ENCODE measurements at regions of chr4 and their contacts with region 1.

Region 1: DNA sequence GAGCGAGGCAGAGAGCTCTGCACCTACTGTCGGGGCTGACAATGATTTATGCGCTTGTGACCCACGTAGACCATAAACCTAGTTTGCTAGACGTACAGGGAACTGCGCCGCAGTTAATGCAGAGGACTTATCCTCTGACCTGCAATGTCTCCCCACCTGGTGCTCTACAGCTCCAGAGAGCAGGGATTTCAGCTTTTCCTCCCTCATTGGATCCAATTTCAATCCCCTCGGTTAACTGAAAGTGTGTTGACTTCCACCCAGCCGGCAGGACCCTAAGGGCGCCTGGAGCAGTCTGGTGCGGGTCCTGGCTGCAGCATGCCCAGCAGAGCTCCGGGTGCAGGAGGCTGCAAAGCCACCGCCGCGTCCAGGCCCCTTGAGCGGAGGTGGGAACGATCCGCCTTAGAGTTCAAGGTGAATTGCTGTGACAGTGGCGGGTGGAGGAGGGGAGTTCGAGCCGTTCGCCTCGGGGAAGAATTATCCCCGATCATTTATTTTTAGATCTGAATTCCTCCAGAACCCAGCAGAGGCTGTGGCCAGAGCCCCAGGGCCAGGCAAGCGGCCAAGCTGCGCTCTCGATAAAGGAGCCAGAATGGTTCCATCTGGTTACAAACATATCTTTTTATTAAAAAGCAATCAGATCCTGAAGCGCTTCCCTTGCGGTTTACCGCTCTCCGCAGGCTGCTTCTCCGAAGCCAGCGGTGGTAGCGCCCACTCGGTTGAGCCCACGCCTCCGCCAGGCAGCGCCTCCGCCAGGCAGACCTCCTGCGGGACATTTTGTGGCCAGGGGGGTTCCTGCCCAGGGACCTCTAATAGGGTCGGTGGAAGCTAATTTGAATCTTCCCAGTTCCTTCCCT is 66.0 kb downstream of the FBXO8 start:
- DNase-seq: peak; percentile 38 to 71 (median 43)
- H3K4me3 ChIP-seq: peak overlapping the region in 2 of 4 donors; percentile 17 to 52
- H3K27ac ChIP-seq: no peak overlapping the region
- H3K4me1 ChIP-seq: peaks cover 9 to 25% of the 10 kb centered on the region in 2 donors
- H3K27me3 ChIP-seq: peaks cover 33% of the 10 kb centered on the region
- CTCF ChIP-seq: no peak
- POLR2A ChIP-seq: no peak

Region 2: GRCh38 chr4:173934201-173934600 is 283.3 kb before region 1 on chr4:
- intact Hi-C with region 1: no loop called
- DNase-seq: no peak
- H3K4me3 ChIP-seq: no peak overlapping the region
- H3K27ac ChIP-seq: no peak overlapping the region
- H3K4me1 ChIP-seq: peaks cover 0 to 6% of the 10 kb centered on the region in 2 donors
- H3K27me3 ChIP-seq: no peaks in the 10 kb centered on the region
- CTCF ChIP-seq: no peak
- POLR2A ChIP-seq: no peak

Region 3: GRCh38 chr4:174265916-174266315 is 48.4 kb after region 1 on chr4:
- intact Hi-C with region 1: no loop called
- DNase-seq: no peak
- H3K4me3 ChIP-seq: no peak overlapping the region
- H3K27ac ChIP-seq: no peak overlapping the region
- H3K4me1 ChIP-seq: peaks cover 0 to 3% of the 10 kb centered on the region in 2 donors
- H3K27me3 ChIP-seq: no peaks in the 10 kb centered on the region
- CTCF ChIP-seq: no peak
- POLR2A ChIP-seq: no peak

Region 4: DNA sequence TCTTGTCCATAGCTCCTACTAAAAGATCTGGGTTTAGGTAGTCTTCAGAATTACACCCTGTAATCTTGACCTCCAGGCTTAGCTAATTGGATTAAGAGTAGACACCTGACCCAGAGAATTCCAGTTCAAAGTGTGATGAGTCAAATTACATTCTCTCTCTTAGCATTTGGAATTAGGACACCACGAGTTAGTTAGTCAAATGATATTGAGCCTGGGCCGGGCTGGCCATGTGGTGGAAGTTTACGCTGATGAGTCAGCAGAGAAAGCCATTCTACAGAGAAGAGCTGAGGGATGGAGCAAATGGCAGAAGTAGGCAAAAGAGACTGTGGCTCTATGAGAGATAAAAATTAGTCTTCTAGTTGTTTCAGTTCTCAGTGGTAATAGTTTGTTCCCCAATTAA is 97.3 kb after region 1 on chr4:
- intact Hi-C with region 1: loop called in 1 of 2 experiments (anchors 5 kb)
- DNase-seq: peak in 2 of 7 donors; percentile 9 to 15
- H3K4me3 ChIP-seq: no peak overlapping the region
- H3K27ac ChIP-seq: no peak overlapping the region
- H3K4me1 ChIP-seq: no peaks in the 10 kb centered on the region
- H3K27me3 ChIP-seq: no peaks in the 10 kb centered on the region
- CTCF ChIP-seq: no peak
- POLR2A ChIP-seq: no peak

Region 5: DNA sequence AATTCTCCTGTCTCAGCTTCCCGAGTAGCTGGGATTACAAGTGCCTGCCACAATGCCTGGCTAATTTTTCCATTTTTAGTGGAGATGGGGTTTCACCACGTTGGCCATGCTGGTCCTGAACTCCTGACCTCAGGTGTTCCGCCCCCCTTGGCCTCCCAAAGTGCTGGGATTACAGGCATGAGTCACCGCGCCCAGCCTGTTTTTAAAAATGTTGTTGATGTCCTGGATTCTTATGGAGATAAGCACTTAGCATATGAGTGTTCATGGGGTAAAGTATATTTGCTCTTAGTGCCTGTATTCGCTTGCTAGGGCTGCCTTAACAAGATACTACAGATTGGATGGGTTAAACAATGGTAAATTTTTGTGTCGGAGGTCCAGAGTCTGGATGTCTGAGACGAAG is 157.9 kb after region 1 on chr4:
- intact Hi-C with region 1: no loop called
- DNase-seq: no peak
- H3K4me3 ChIP-seq: no peak overlapping the region
- H3K27ac ChIP-seq: no peak overlapping the region
- H3K4me1 ChIP-seq: no peaks in the 10 kb centered on the region
- H3K27me3 ChIP-seq: no peaks in the 10 kb centered on the region
- CTCF ChIP-seq: no peak
- POLR2A ChIP-seq: no peak

Region 6: DNA sequence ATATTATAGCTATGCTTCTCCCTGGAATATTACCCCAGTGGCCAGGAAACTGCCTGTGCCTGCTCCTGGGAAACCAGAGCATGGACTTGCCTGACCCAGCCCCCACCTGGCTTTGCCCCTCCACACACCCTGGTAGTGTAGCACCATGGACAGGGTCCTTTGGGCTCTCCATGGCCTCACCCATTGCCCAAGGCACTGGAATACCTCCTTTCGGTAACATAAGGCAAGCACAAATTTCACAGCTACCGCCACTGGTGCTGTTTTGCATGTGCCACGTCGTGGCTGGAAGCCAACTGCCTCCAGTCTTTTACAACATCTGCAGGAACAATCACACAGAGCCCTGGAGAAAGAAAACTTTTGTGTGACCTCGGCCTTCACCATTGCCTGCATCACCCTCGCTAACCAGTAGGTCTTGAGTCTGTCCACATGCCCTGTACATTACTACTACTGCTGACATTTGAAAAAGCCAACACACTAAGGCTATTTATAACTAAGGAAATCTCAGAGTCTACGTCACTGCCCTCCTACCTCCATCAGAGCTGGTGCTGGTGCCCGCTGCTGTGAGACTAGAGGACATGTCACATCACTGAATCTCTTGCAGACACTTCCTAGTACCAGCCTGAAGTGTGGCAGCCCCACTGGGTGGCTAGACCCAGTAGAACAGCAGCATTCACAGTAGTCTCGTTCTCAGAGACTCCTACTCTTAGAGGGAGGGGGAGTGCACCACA is 257.1 kb after region 1 on chr4:
- intact Hi-C with region 1: no loop called
- DNase-seq: no peak
- H3K4me3 ChIP-seq: no peak overlapping the region
- H3K27ac ChIP-seq: no peak overlapping the region
- H3K4me1 ChIP-seq: no peaks in the 10 kb centered on the region
- H3K27me3 ChIP-seq: no peaks in the 10 kb centered on the region
- CTCF ChIP-seq: no peak
- POLR2A ChIP-seq: no peak